K562 (cell line): ENCODE measurements at regions of chr9 and their contacts with region 1.

Region 1: DNA sequence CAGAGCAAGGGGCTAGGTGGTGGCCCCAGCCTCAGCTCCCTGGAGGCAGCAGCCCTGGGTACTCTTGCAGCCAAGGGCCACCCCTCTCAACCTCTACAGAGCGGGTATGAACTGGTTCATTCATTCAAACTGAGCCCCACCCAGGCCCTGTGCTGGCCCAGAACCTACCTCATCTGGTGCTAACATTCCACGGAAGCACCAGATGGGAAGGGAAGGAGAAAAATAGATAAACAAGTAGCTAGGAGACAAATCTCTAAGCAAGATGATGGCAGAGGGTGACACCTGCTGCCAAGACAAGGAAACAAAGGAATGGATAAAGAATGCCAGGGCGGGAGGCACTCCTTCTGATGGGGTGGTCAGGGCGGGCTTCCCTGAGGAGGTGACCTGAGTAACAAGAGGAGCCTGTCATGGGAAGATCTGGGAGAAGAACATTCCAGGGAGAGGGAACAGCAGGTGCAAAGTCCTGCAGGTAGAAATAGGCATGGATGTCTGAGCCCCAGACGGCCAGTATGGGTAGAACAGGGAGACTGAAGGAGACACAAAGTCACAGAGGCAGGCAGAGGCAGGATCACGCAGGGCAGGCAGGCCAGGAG is 6.1 kb downstream of the ST6GALNAC4 start:
- DNase-seq: no peak
- ATAC-seq: peak; percentile 14
- H3K4me3 ChIP-seq: no peak overlapping the region
- H3K27ac ChIP-seq: peak overlapping the region; percentile 36; the same call in 1 of the 3 replicates
- H3K4me1 ChIP-seq: peaks cover 21 to 48% of the 10 kb centered on the region in 2 experiments
- H3K27me3 ChIP-seq: no peaks in the 10 kb centered on the region
- CTCF ChIP-seq: peak; percentile 22 to 41 (median 26); a peak in 3 of 6 replicates
- EP300 ChIP-seq: no peak
- POLR2A ChIP-seq: no peak
- RAD21 ChIP-seq: peak in 1 of 2 experiments; percentile 46; a peak in 3 of 4 replicates

Region 2: GRCh38 chr9:127877566-127877998 is 33.1 kb before region 1 on chr9 and contains the start of gene AK1:
- CTCF ChIA-PET with region 1: no interaction called
- POLR2A ChIA-PET with region 1: no interaction called
- in situ Hi-C with region 1: loop called (anchors 5 kb)
- intact Hi-C with region 1: no loop called
- DNase-seq: peak; percentile 68 to 82 (median 80)
- ATAC-seq: peak; percentile 85
- H3K4me3 ChIP-seq: peak within 1 kb of the TSS; percentile 46
- H3K27ac ChIP-seq: peak within 1 kb of the TSS; percentile 65
- H3K4me1 ChIP-seq: peaks cover 19 to 54% of the 10 kb centered on the region in 2 experiments; a peak in 4 of 5 replicates
- H3K27me3 ChIP-seq: no peaks in the 10 kb centered on the region
- CTCF ChIP-seq: no peak
- EP300 ChIP-seq: no peak
- POLR2A ChIP-seq: peak; percentile 55; the same call in 1 of the 2 replicates
- RAD21 ChIP-seq: no peak
- polyA plus RNA-seq, gene AK1: 10.1 to 38.9 TPM

Region 3: DNA sequence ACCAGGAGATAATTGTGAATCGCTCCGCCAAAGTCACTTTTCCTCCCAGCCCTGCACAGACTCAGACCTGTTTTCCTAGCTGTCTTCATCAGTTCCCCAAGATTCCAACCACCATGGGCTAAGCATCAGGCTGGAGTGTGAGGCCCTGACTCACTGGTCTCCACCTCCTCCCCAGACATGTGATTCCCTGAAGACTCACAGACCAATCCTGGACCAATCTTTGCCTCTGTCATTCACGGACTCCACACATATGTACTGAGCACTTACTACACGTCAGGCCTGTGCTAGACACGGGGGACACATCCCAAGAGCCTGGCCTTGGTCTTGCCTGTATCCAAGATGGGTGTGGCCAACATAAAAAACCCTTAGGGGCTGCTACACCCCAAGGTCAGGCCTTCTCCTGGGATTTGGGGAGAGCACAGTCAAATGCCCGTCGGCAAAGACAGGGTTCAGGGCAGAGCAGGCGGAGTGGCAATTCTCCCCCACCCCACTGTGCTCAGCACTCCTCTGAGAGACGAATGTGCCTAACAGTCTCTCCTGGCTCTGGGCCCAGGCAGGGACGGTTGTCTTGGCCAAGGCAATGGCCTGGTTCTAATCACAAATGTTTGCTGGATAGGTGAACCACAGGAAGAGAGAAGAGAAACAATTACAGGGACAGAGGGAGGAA is 58.1 kb after region 1 on chr9:
- CTCF ChIA-PET with region 1: no interaction called
- POLR2A ChIA-PET with region 1: no interaction called
- in situ Hi-C with region 1: no loop called
- intact Hi-C with region 1: no loop called
- DNase-seq: no peak
- ATAC-seq: peak; percentile 6; the same call in 1 of the 3 replicates
- H3K4me3 ChIP-seq: no peak overlapping the region
- H3K27ac ChIP-seq: 0 out of 3 replicates have a peak overlapping the region, but pooled peaks have one; percentile 19
- H3K4me1 ChIP-seq: peaks cover 45 to 95% of the 10 kb centered on the region in 2 experiments
- H3K27me3 ChIP-seq: no peaks in the 10 kb centered on the region
- CTCF ChIP-seq: no peak
- EP300 ChIP-seq: no peak
- POLR2A ChIP-seq: no peak
- RAD21 ChIP-seq: no peak

Region 4: DNA sequence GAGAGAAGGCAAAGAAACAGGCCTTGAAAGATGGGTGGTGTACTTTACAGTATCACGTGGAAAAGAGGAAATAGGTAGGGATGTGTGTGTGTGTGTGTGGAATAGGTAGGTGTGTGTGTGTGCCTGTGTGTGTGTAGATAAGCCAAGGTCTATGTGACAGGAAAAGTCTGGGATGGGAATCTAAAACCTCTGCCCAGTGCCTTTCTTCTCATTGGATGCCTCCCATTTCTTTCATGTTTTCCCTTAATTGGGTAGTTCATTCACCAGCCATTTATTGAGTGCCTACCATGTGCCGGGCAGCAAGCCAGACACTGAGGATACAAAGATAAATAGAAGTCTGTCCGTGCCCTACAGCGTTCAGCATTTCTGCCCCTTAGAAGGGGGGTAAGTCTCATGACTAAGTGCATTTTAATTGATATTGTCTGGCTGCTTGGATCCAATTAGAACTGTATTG is 461.5 kb after region 1 on chr9:
- CTCF ChIA-PET with region 1: no interaction called
- POLR2A ChIA-PET with region 1: no interaction called
- in situ Hi-C with region 1: no loop called
- intact Hi-C with region 1: no loop called
- DNase-seq: no peak
- ATAC-seq: no peak
- H3K4me3 ChIP-seq: peak overlapping the region; percentile 84
- H3K27ac ChIP-seq: peak overlapping the region; percentile 75; the same call in 2 of the 3 replicates
- H3K4me1 ChIP-seq: peaks cover 13 to 14% of the 10 kb centered on the region in 2 experiments
- H3K27me3 ChIP-seq: no peaks in the 10 kb centered on the region
- CTCF ChIP-seq: no peak
- EP300 ChIP-seq: no peak
- POLR2A ChIP-seq: no peak
- RAD21 ChIP-seq: no peak